ENCODE measurements at regions of chr11 and their contacts with region 1.

Region 1: GRCh38 chr11:112280268-112281126 is 19.8 kb upstream of the PLET1 start:
- DNase-seq: peak; percentile 69 to 90
- H3K4me3 ChIP-seq: no peak overlapping the region
- CTCF ChIP-seq: peak in 1 of 3 donors; percentile 51
- POLR2A ChIP-seq: no peak

Region 2: GRCh38 chr11:112100462-112100861 is 180.0 kb before region 1 on chr11:
- intact Hi-C with region 1: loop called (anchors 10 kb)
- DNase-seq: no peak
- H3K4me3 ChIP-seq: no peak overlapping the region
- CTCF ChIP-seq: no peak
- POLR2A ChIP-seq: no peak

Region 3: DNA sequence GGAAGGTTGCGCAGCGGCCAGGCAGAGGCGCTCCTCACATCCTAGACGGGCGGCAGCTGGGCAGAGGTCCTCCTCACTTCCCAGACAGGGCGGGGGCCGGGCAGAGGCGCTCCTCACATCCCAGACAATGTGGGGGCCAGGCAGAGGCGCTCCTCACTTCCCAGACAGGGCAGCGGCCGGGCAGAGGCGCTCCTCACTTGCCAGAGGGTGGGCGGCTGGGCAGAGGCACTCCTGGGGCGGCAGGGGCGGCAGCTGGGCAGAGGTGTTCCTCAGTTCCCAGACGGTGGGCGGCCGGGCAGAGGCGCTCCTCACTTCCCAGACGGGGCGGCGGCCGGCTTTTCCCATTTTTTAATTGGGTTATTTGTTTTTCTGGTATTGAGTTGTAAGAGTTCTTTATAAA is 74.4 kb before region 1 on chr11:
- intact Hi-C with region 1: no loop called
- DNase-seq: peak in 1 of 2 donors; percentile 85
- H3K4me3 ChIP-seq: no peak overlapping the region
- CTCF ChIP-seq: no peak
- POLR2A ChIP-seq: no peak

Region 4: DNA sequence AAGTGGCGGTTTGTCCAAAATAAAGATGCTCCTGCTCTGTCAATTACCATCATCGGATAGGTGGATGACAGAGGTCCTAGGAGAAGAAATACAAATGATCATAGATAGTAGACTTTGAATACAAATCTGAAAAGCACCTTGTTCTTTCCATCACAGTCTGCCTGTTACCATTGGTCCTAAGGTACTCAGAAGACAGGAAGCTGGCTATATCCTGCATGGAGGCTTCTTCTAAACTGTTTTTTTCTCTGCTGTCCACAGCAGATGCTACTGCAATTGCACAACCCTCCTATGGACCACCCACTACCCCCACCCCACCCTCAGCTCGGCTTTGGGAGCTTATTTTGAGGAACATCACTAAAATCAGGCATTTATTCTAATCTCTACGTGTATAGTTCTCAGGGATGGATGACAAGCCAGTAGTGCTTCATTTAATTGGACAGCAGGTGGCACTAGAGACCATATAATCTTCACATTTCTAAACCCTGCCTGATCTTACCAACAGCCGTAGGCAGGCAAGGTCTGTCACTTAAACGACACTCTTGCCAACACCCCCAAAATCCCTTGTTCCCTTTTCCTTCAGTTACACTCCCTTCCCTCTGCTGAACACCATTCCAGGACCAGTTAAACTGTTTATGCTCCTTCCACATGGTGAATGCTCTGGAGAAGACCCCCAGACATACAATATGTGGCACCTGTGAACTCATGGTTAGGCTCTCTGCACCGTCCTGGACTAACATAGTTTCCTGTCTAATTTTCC is 60.8 kb before region 1 on chr11:
- intact Hi-C with region 1: loop called (anchors 5 kb)
- DNase-seq: peak in 1 of 2 donors; percentile 50
- H3K4me3 ChIP-seq: no peak overlapping the region
- CTCF ChIP-seq: peak in 1 of 3 donors; percentile 85
- POLR2A ChIP-seq: no peak

Region 5: GRCh38 chr11:114001416-114001815 is 1720.9 kb after region 1 on chr11:
- intact Hi-C with region 1: loop called (anchors 10 kb)
- DNase-seq: no peak
- H3K4me3 ChIP-seq: no peak overlapping the region
- CTCF ChIP-seq: no peak
- POLR2A ChIP-seq: no peak

Measured in lower leg skin (tissue), 4 donors.